Prostate gland (tissue), 2 donors: ENCODE measurements at regions of chr9 and their contacts with region 1.

Region 1: GRCh38 chr9:136629752-136630661 is 32.7 kb upstream of the EGFL7 start:
- DNase-seq: no peak
- H3K4me3 ChIP-seq: no peak overlapping the region
- H3K27ac ChIP-seq: no peak overlapping the region
- H3K4me1 ChIP-seq: peaks cover 4% of the 10 kb centered on the region
- H3K27me3 ChIP-seq: no peaks in the 10 kb centered on the region
- CTCF ChIP-seq: peak in 2 of 4 experiments; percentile 47 to 56
- POLR2A ChIP-seq: no peak

Region 2: GRCh38 chr9:136488247-136489214 is 141.5 kb before region 1 on chr9:
- intact Hi-C with region 1: loop called (anchors 1 kb)
- DNase-seq: peak; percentile 73
- H3K4me3 ChIP-seq: no peak overlapping the region
- H3K27ac ChIP-seq: no peak overlapping the region
- H3K4me1 ChIP-seq: no peaks in the 10 kb centered on the region
- H3K27me3 ChIP-seq: no peaks in the 10 kb centered on the region
- CTCF ChIP-seq: peak; percentile 97 to 98 (median 98)
- POLR2A ChIP-seq: no peak

Region 3: GRCh38 chr9:136665111-136665703 is 35.2 kb after region 1 on chr9:
- intact Hi-C with region 1: no loop called
- DNase-seq: no peak
- H3K4me3 ChIP-seq: peak overlapping the region; percentile 27 to 48
- H3K27ac ChIP-seq: peak overlapping the region in 1 of 2 donors; percentile 24
- H3K4me1 ChIP-seq: no peaks in the 10 kb centered on the region
- H3K27me3 ChIP-seq: no peaks in the 10 kb centered on the region
- CTCF ChIP-seq: peak in 2 of 4 experiments; percentile 28 to 43
- POLR2A ChIP-seq: no peak